CD8-positive, alpha-beta memory T cell (primary cell): ENCODE measurements at regions of chr22 and their contacts with region 1.

Region 1: DNA sequence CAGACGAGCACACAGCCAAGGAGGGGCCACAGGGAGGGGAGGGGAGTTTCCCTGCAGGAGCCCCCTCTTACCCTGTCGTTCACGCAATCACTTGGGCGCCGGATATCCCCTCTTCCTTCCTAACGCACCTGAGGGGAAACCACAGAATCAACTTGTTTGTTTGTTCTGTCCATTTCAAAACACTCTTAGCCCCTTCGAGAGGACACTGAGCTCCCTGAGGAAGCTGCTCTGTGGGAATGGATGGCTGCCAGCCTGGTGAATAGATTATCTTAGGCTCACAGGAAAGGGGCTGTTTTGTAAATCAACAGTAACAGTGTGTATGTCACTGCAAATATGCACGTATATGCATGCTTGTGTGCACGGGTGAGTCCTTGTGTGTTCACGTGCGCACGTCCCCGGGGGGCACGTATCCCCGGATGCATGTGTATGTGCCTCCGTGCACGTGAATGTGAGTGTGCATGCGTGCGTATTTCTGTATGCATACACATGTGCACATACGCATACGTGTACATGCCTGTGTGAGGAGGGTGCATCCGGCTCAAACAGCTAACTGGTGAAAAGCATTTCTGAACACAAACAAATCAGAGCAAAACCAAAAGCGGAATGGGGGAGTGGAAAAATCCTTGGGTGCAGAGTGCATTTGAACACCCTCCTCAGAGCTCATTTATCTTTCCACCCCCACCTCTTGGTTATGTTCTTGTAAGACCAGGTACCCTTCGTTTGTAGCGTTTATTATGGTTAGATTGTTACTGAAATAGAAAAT is 7.2 kb downstream of the ARSA start:
- DNase-seq: peak; percentile 80 to 95 (median 90)
- H3K4me3 ChIP-seq: peak overlapping the region; percentile 70
- H3K4me3 Mint-ChIP-seq: peak overlapping the region; percentile 87 to 92 (median 90)
- H3K27ac ChIP-seq: peak overlapping the region; percentile 76
- H3K27ac Mint-ChIP-seq: peak overlapping the region; percentile 90 to 99 (median 98)
- H3K4me1 ChIP-seq: peaks cover 35% of the 10 kb centered on the region
- H3K4me1 Mint-ChIP-seq: peaks cover 31 to 41% (median 31%) of the 10 kb centered on the region in 3 donors
- H3K27me3 ChIP-seq: no peaks in the 10 kb centered on the region
- H3K27me3 Mint-ChIP-seq: peaks cover 0 to 2% of the 10 kb centered on the region in 2 donors

Region 2: DNA sequence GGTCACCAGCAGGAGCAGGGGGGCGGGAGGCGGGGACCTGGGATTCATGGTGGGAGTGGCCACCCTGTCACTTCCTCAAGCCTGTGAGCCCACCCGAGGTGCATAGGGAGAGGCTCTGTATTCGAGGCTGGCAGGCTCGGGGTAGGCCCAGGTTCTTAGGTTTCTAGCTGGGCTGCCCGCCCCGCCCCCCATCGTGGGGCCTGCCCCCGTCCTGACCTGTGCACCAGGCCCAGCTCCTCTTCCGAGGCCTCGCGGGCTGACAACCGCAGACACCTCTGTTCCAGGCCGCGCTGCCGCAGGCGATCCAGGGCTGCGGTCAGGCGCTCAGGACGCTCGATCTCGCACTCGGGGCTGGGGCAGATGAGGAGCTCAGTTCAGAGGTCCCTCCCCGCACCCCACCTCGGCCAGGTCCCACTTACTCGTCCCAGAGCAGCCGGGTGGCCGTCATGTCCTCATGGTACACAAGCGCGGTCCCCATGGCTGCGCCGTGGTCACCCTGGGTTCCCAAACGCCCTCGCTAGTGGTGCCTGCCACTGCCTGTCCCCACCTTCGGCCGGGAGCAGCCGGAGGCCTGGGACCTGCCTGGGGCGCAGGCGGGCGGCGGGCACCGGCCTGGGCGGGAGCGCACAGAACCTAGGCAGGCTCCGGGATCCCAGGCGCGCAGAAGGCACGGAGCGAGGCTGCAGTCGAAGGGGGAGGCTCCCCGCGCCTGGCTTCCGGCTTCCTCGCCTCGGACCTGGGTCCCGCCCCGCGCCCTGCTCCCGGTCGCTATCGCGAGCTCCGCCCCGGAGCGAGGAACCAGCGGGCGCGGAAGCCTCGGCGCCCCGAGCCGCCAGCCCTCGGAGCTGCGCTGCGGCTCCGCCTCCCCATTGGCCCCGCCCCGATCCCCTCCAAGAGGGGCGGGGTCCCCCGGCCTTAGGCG is 370.0 kb before region 1 on chr22 and contains the start of gene HDAC10:
- CTCF ChIA-PET with region 1: interaction called, 23 read pairs
- POLR2A ChIA-PET with region 1: no interaction called
- DNase-seq: peak; percentile 68 to 84 (median 75)
- H3K4me3 ChIP-seq: peak within 1 kb of the TSS; percentile 83
- H3K4me3 Mint-ChIP-seq: peak within 1 kb of the TSS; percentile 73 to 86 (median 82)
- H3K27ac ChIP-seq: peak within 1 kb of the TSS; percentile 65
- H3K27ac Mint-ChIP-seq: peak within 1 kb of the TSS in 7 of 8 donors; percentile 43 to 85 (median 60)
- H3K4me1 ChIP-seq: peaks cover 32% of the 10 kb centered on the region
- H3K4me1 Mint-ChIP-seq: peaks cover 8 to 36% (median 9%) of the 10 kb centered on the region in 3 donors
- H3K27me3 ChIP-seq: no peaks in the 10 kb centered on the region
- H3K27me3 Mint-ChIP-seq: peaks cover 0 to 1% of the 10 kb centered on the region in 2 donors
- total RNA-seq, gene HDAC10: 42.5 to 44.7 TPM

Region 3: GRCh38 chr22:50469377-50470305 is 151.1 kb before region 1 on chr22:
- CTCF ChIA-PET with region 1: interaction called, 4 read pairs
- POLR2A ChIA-PET with region 1: interaction called, 10 read pairs
- DNase-seq: peak; percentile 97 to 100 (median 98)
- H3K4me3 ChIP-seq: peak overlapping the region; percentile 63
- H3K4me3 Mint-ChIP-seq: peak overlapping the region; percentile 79 to 98 (median 83)
- H3K27ac ChIP-seq: peak overlapping the region; percentile 51
- H3K27ac Mint-ChIP-seq: peak overlapping the region; percentile 78 to 99 (median 97)
- H3K4me1 ChIP-seq: peaks cover 59% of the 10 kb centered on the region
- H3K4me1 Mint-ChIP-seq: peaks cover 60 to 78% (median 64%) of the 10 kb centered on the region in 3 donors
- H3K27me3 ChIP-seq: no peaks in the 10 kb centered on the region
- H3K27me3 Mint-ChIP-seq: no peaks in the 10 kb centered on the region

Region 4: DNA sequence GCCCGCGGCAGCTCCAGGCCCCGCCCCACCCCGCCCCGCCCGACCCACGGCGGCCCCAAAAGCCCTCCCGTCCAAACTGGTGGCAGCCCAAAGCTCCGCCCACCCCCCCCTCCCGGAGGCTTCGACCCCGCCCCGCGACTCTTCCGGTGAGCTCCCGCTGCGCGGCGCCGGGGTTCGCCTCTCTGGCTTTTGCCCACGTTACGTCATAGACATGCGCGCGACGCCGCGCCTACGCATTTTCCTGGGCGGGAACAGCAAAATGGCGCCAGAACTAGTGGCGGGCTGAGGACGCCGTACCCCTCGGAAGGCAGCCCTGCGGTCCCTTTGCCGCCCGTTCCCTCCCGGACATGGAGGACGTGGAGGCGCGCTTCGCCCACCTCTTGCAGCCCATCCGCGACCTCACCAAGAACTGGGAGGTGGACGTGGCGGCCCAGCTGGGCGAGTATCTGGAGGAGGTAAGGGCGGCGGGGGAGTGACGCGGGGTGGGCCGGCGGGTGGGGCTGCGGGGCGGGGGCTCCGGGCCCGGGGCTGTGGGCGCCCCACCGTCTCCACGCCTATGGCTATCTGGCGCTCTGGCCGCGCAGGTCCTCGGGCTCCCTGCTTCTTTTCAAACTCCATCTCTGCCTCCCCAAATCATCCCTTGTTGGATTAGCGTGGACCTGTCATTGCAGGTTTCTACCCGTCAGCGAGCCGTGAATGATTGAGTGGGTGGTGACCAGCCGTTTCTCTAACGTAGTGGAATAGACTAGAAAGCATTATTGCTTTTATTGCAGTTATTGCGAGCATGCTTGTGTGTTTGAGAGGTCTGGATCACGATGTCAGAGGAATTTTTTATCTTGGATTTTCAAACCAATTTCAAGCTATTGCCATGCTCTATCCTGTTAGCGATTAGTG is 112.5 kb before region 1 on chr22 and contains the start of gene NCAPH2:
- CTCF ChIA-PET with region 1: interaction called, 20 read pairs
- POLR2A ChIA-PET with region 1: interaction called, 19 read pairs
- DNase-seq: peak in 4 of 5 donors; percentile 96 to 98 (median 96)
- H3K4me3 ChIP-seq: peak within 1 kb of the TSS; percentile 80
- H3K4me3 Mint-ChIP-seq: peak within 1 kb of the TSS; percentile 92 to 99 (median 94)
- H3K27ac ChIP-seq: peak within 1 kb of the TSS; percentile 88
- H3K27ac Mint-ChIP-seq: peak within 1 kb of the TSS; percentile 93 to 100 (median 98)
- H3K4me1 ChIP-seq: peaks cover 23% of the 10 kb centered on the region
- H3K4me1 Mint-ChIP-seq: peaks cover 17 to 32% (median 19%) of the 10 kb centered on the region in 3 donors
- H3K27me3 ChIP-seq: no peaks in the 10 kb centered on the region
- H3K27me3 Mint-ChIP-seq: peaks cover 0 to 1% of the 10 kb centered on the region in 2 donors
- total RNA-seq, gene NCAPH2: 155 to 165 TPM

Region 5: DNA sequence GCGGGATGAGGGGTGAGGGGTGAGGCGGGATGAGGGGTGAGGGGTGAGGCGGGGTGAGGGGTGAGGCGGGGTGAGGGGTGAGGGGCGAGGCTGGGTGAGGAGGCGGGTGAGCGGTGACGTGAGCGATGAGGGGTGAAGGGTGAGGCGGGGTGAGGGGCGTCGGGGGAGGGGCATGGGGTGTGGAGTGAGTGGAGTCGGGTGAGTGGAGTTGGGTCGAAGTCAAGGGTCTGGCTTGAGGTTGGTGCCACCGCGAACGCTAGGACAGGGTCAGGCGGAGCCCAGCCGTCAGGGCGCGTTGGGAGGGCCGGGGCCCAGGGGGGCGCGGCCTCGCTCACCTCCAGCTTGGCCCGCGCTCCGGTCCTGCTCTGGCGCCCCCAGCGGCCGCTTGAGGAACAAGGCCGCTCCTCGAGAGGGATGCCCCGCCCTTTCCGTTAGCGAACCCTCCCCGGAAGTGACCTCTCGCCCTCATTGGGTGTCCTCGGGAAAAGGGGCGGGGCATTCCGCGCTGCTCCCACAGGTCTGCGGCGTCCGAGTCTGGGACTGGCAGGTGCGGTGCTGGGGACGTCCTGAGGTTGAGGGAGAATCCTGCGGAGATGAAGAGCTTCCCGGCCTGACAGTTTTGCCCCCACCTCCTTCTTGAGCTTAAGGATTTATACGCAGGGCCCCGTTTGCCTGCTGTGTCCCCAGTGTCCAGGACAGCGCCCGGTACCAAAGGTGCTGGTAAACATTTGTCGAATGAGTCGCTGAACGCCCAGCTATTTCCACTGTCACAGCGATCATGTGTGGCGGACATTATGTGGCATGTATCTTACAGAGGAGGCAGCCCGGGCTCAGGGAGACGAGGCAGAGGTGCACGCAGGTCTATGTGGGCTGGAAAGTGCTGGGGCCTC is 58.0 kb before region 1 on chr22 and contains the start of gene SYCE3:
- CTCF ChIA-PET with region 1: interaction called, 19 read pairs
- POLR2A ChIA-PET with region 1: interaction called, 15 read pairs
- DNase-seq: peak; percentile 95 to 98 (median 97)
- H3K4me3 ChIP-seq: peak within 1 kb of the TSS; percentile 85
- H3K4me3 Mint-ChIP-seq: peak within 1 kb of the TSS; percentile 81 to 98 (median 92)
- H3K27ac ChIP-seq: peak within 1 kb of the TSS; percentile 29
- H3K27ac Mint-ChIP-seq: peak within 1 kb of the TSS; percentile 74 to 98 (median 90)
- H3K4me1 ChIP-seq: no peaks in the 10 kb centered on the region
- H3K4me1 Mint-ChIP-seq: peaks cover 18 to 21% (median 19%) of the 10 kb centered on the region in 3 donors
- H3K27me3 ChIP-seq: no peaks in the 10 kb centered on the region
- H3K27me3 Mint-ChIP-seq: peaks cover 0 to 4% of the 10 kb centered on the region in 2 donors
- total RNA-seq, gene SYCE3: not detected

Region 6: GRCh38 chr22:50696797-50697561 is 76.2 kb after region 1 on chr22:
- CTCF ChIA-PET with region 1: no interaction called
- POLR2A ChIA-PET with region 1: no interaction called
- DNase-seq: peak in 1 of 5 donors; percentile 39
- H3K4me3 ChIP-seq: no peak overlapping the region
- H3K4me3 Mint-ChIP-seq: no peak overlapping the region
- H3K27ac ChIP-seq: no peak overlapping the region
- H3K27ac Mint-ChIP-seq: no peak overlapping the region
- H3K4me1 ChIP-seq: no peaks in the 10 kb centered on the region
- H3K4me1 Mint-ChIP-seq: peaks cover 3% of the 10 kb centered on the region in 3 donors
- H3K27me3 ChIP-seq: no peaks in the 10 kb centered on the region
- H3K27me3 Mint-ChIP-seq: peaks cover 3 to 5% of the 10 kb centered on the region in 2 donors